Sigmoid colon (tissue), 7 donors: ENCODE measurements at regions of chr1 and their contacts with region 1.

Region 1: GRCh38 chr1:44594871-44595746 is 79.2 kb downstream of the TMEM53 start:
- DNase-seq: peak; percentile 82
- H3K4me3 ChIP-seq: no peak overlapping the region
- H3K27ac ChIP-seq: no peak overlapping the region
- H3K4me1 ChIP-seq: no peaks in the 10 kb centered on the region
- H3K27me3 ChIP-seq: peaks cover 0 to 26% (median 0%) of the 10 kb centered on the region in 3 donors
- CTCF ChIP-seq: peak; percentile 83 to 95 (median 92)
- EP300 ChIP-seq: no peak
- POLR2A ChIP-seq: no peak

Region 2: DNA sequence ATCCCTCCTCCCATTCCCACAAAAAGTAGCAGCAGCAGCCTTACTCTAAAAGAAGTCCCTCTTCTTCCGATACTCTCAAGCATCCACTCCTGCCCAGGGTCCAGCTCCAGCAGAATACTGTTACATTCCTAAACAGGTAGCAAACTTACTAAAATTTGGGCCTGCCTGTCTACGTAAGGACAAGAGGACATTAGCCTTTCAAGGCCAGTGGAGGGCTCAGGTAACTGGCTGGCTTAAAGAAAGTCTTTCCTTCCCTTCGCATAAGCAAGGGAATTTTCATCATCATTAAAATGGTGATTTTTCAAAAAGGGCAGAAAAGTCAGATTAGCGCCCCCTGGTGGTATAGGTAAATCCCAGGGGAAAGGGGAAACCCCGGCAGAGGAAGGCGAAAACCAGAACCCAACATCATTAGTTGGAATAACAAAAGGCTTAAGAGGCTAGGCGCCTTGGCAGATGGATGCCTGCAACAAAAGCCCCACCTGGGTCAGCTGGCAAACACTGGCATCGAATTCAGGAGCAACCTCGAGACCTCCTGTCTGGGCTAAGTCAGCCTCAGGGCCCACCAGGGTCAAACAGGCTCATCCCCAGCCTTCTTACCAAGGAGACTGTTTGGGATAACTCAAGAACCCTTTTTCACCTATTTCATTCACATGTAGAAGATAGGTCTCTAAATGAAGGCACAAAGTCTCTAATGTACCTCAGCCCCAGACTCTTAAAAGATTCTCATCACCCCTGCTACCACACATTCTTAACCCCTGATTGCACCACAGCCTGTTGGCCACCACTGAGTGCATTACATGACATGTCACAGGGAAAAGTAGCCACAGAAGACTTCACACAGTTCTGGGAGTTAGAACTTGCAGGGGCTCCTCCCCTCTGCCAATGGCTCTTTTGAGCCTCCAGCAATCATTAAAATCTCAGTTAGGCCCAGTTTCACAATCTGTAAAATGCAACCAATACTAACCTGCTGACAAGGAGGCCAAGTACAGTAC is 276.7 kb before region 1 on chr1:
- intact Hi-C with region 1: loop called (anchors 10 kb)
- DNase-seq: no peak
- H3K4me3 ChIP-seq: no peak overlapping the region
- H3K27ac ChIP-seq: no peak overlapping the region
- H3K4me1 ChIP-seq: no peaks in the 10 kb centered on the region
- H3K27me3 ChIP-seq: no peaks in the 10 kb centered on the region
- CTCF ChIP-seq: peak; percentile 30 to 83 (median 71)
- EP300 ChIP-seq: no peak
- POLR2A ChIP-seq: no peak

Region 3: DNA sequence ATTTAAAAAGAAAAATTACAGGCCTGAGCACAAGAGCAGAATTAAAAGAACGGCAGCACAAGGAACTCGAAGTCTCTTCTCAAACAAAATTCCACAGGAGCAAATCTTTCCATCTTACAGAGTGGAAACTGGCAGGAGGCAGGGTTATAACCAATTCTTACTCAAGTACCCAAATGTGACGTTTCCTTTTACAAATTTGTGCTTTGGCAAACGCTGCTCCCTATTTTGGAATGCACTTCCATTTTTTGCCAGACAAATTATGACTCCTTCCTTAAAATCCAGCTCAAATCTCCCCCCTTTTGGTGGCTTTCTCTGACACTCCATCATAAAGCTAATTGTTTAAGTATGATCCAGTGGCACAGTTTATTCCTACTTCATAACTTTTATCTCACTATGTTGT is 247.8 kb before region 1 on chr1:
- intact Hi-C with region 1: no loop called
- DNase-seq: no peak
- H3K4me3 ChIP-seq: no peak overlapping the region
- H3K27ac ChIP-seq: peak overlapping the region in 3 of 4 donors; percentile 35 to 53 (median 36)
- H3K4me1 ChIP-seq: peaks cover 0 to 39% (median 26%) of the 10 kb centered on the region in 4 donors
- H3K27me3 ChIP-seq: no peaks in the 10 kb centered on the region
- CTCF ChIP-seq: no peak
- EP300 ChIP-seq: no peak
- POLR2A ChIP-seq: no peak

Region 4: DNA sequence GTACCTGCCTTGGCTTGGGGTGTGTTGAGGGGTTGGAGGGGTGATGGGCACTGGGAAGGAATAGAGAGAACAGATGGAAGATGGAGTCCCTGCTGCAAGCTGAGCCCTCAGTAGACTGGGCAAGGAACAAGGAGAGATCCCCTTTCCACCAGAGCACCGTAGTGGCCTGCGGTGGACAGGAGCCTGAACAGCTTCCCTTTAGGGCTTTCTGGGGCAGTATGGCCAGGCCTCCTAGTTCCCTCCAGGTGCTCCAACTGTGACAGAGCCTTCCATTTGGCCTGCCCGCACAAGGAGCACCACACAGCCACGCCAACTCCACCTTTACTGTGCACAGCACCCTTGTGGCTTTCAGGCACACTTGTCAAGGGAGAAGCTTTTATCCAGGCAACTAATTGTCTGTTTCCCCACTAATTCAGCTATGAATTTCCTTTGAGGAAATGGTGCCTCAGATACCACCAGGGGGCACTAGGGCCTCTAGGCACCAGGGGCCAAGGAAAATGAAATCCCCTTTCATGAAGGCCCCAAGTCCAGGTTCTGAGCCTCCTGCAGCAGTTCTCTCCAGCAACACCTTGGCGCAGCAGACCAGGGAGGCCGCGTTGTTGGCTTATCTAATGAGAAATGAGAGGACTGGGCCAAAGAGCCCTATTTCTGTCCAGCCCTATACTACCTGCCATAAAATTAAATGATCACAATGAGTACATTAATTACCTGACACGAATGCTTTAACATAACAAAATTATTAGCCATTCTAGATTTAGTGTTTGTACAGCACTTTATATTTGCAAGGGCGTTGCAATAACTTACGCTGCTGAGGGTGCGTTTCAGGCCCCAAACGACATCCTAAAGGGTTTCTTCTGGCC is 217.0 kb before region 1 on chr1:
- intact Hi-C with region 1: loop called (anchors 2 kb)
- DNase-seq: no peak
- H3K4me3 ChIP-seq: no peak overlapping the region
- H3K27ac ChIP-seq: no peak overlapping the region
- H3K4me1 ChIP-seq: no peaks in the 10 kb centered on the region
- H3K27me3 ChIP-seq: no peaks in the 10 kb centered on the region
- CTCF ChIP-seq: peak; percentile 12 to 58 (median 44)
- EP300 ChIP-seq: no peak
- POLR2A ChIP-seq: no peak

Region 5: GRCh38 chr1:44553771-44554170 is 41.3 kb before region 1 on chr1:
- intact Hi-C with region 1: no loop called
- DNase-seq: no peak
- H3K4me3 ChIP-seq: no peak overlapping the region
- H3K27ac ChIP-seq: no peak overlapping the region
- H3K4me1 ChIP-seq: no peaks in the 10 kb centered on the region
- H3K27me3 ChIP-seq: peaks cover 0 to 12% (median 0%) of the 10 kb centered on the region in 3 donors
- CTCF ChIP-seq: no peak
- EP300 ChIP-seq: no peak
- POLR2A ChIP-seq: no peak